RWPE1 (cell line): ENCODE measurements at regions of chr10 and their contacts with region 1.

Region 1: DNA sequence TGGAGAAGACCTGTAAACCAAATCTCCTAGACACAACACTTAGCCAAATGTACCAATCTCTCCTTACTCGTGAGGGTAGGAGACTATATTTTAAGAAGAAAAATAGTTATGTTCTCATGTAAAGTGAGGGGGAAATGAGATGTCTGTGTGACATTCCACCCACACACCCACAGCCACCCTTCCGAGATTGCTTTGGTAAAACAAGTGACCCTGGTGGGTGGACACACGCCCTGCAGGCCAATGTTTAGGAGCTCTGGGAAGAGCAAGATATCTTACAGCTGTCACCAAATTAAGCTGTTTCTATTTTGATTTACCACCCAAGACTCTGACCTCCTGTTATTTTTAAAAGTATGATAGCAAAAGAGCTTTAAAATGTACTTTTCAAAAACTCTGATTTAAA is 147.2 kb upstream of the PFKP start:
- DNase-seq: no peak
- H3K27ac ChIP-seq: no peak overlapping the region
- CTCF ChIP-seq: no peak

Region 2: GRCh38 chr10:1643161-1643907 is 1276.8 kb before region 1 on chr10:
- CTCF ChIA-PET with region 1: no interaction called
- POLR2A ChIA-PET with region 1: interaction called, 15 read pairs
- DNase-seq: peak; percentile 34
- H3K27ac ChIP-seq: no peak overlapping the region
- CTCF ChIP-seq: no peak

Region 3: GRCh38 chr10:2936816-2937215 is 16.6 kb after region 1 on chr10:
- CTCF ChIA-PET with region 1: no interaction called
- POLR2A ChIA-PET with region 1: no interaction called
- DNase-seq: no peak
- H3K27ac ChIP-seq: no peak overlapping the region
- CTCF ChIP-seq: no peak

Region 4: DNA sequence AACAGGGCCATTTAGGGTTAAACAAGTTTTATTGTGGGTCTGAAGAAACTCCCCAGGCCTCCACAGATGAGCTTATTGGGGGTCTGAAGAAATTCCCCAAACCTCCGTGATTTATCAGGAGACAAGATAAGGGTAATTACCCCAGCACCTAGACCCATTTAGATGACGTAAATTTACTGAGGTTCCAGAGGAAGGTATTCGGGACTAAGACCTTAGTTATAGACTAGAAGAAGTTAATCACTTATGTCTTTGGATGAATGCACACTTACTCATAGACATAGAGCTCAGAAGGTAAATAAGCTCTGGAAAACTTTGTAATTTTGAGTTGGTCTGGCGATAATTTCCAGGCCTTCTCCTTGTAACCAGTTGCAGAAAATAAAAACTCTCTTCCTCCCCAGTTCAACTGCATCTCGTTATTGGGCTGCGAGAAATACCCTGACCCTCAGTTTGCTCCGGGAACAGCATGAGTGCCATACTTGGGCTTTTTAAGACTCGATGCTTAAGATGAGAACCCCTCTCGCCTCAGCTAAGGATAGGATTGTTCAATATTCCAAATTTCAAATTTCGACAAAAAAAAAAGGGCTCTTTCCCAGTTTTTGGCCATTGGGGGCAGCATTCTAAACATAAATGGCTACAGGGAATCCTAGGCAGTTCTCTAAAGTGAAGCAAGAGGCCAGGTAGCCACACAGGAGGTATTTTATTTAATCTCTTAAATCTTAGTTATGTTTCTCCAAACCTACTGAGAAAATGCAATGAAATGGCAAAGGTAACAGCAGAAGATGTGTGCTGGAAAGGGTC is 72.4 kb after region 1 on chr10:
- CTCF ChIA-PET with region 1: no interaction called
- POLR2A ChIA-PET with region 1: no interaction called
- DNase-seq: no peak
- H3K27ac ChIP-seq: no peak overlapping the region
- CTCF ChIP-seq: no peak

Region 5: GRCh38 chr10:3192856-3193635 is 272.9 kb after region 1 on chr10:
- CTCF ChIA-PET with region 1: no interaction called
- POLR2A ChIA-PET with region 1: no interaction called
- DNase-seq: peak; percentile 56
- H3K27ac ChIP-seq: no peak overlapping the region
- CTCF ChIP-seq: peak; percentile 89